CD8-positive, alpha-beta memory T cell (primary cell): ENCODE measurements at regions of chr3 and their contacts with region 1.

Region 1: GRCh38 chr3:48928679-48929078 is 10.0 kb downstream of the ARIH2 start:
- DNase-seq: no peak
- H3K4me3 ChIP-seq: no peak overlapping the region
- H3K4me3 Mint-ChIP-seq: peak overlapping the region in 4 of 7 donors; percentile 19 to 35 (median 22)
- H3K27ac ChIP-seq: no peak overlapping the region
- H3K27ac Mint-ChIP-seq: peak overlapping the region in 6 of 8 donors; percentile 6 to 92 (median 41)
- H3K4me1 ChIP-seq: peaks cover 49% of the 10 kb centered on the region
- H3K4me1 Mint-ChIP-seq: peaks cover 60 to 79% (median 71%) of the 10 kb centered on the region in 3 donors
- H3K27me3 ChIP-seq: no peaks in the 10 kb centered on the region
- H3K27me3 Mint-ChIP-seq: no peaks in the 10 kb centered on the region

Region 2: DNA sequence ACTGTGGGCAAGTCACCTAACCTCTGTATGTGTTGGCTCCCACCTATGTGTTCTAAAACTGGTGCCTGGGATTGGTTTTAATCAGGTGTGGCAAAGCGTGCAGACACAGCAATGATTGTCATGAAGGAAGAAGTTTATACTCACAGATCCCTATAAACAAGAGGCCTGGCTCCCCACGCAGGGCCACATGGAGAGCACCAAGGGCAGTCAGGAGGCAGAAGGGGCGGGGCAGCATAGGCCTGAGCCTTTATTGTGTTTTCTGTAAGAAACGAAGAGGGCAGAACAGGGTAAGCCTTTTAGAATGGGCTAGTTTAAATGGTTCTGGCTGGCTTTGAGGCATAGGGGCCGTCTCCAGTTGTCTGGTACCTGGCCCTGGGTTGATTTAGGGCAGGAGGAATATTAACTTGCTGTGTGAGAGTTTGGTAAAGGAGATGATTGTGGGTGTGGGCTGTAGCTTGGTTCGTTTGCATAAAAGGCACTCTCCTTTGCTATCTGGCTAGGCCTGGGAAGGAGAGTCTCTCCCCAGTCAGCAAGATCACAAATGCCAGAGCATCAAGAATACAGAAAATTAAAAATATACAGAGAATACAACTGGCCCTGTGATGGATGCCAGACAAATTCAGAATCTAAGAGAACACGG is 558.9 kb before region 1 on chr3:
- CTCF ChIA-PET with region 1: no interaction called
- POLR2A ChIA-PET with region 1: no interaction called
- DNase-seq: no peak
- H3K4me3 ChIP-seq: no peak overlapping the region
- H3K4me3 Mint-ChIP-seq: no peak overlapping the region
- H3K27ac ChIP-seq: no peak overlapping the region
- H3K27ac Mint-ChIP-seq: no peak overlapping the region
- H3K4me1 ChIP-seq: no peaks in the 10 kb centered on the region
- H3K4me1 Mint-ChIP-seq: no peaks in the 10 kb centered on the region
- H3K27me3 ChIP-seq: no peaks in the 10 kb centered on the region
- H3K27me3 Mint-ChIP-seq: peaks cover 0 to 1% of the 10 kb centered on the region in 2 donors

Region 3: DNA sequence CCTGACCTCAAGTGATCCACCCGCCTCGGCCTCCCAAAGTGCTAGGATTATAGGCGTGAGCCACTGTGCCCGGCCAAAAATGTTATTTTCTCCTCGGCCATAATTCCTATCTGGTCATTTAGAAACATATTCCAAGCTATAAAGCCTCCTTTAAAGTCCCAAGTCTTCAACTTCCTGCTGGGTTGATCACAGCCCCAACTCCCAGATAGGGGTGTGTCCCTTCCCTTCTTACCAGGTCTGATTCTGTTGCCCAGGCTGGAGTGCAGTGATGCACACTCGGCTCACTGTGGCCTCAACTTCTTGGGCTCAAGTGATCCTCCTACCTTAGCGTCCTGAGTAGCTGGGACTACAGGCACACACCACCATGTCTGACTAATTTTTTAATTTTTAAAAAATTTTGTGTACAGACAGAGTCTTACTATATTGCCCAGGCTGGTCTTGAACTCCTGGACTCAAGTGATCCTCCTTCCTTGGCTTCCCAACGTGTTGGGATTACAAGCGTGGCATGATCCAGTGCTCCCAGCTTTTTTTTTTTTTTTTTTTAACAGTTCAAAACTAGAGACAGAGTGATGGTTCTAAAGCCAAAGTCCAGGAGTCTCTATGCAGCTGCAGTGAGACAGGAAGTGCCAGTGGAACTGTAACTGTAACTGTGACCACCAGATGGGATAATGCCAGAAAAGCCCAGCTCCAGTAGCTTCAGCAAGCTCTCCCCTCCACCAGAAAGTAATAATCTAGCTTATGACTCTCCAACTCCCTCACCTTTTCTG is 72.8 kb before region 1 on chr3:
- CTCF ChIA-PET with region 1: no interaction called
- POLR2A ChIA-PET with region 1: no interaction called
- DNase-seq: no peak
- H3K4me3 ChIP-seq: no peak overlapping the region
- H3K4me3 Mint-ChIP-seq: no peak overlapping the region
- H3K27ac ChIP-seq: no peak overlapping the region
- H3K27ac Mint-ChIP-seq: peak overlapping the region in 4 of 8 donors; percentile 26 to 96 (median 63)
- H3K4me1 ChIP-seq: no peaks in the 10 kb centered on the region
- H3K4me1 Mint-ChIP-seq: no peaks in the 10 kb centered on the region
- H3K27me3 ChIP-seq: no peaks in the 10 kb centered on the region
- H3K27me3 Mint-ChIP-seq: no peaks in the 10 kb centered on the region

Region 4: GRCh38 chr3:48891606-48892005 is 37.1 kb before region 1 on chr3:
- CTCF ChIA-PET with region 1: no interaction called
- POLR2A ChIA-PET with region 1: no interaction called
- DNase-seq: no peak
- H3K4me3 ChIP-seq: no peak overlapping the region
- H3K4me3 Mint-ChIP-seq: no peak overlapping the region
- H3K27ac ChIP-seq: no peak overlapping the region
- H3K27ac Mint-ChIP-seq: no peak overlapping the region
- H3K4me1 ChIP-seq: peaks cover 8% of the 10 kb centered on the region
- H3K4me1 Mint-ChIP-seq: peaks cover 16 to 39% (median 22%) of the 10 kb centered on the region in 3 donors
- H3K27me3 ChIP-seq: no peaks in the 10 kb centered on the region
- H3K27me3 Mint-ChIP-seq: no peaks in the 10 kb centered on the region

Region 5: GRCh38 chr3:48918388-48919214 is 10.1 kb before region 1 on chr3 and contains the start of gene ARIH2:
- CTCF ChIA-PET with region 1: interaction called, 15 read pairs
- POLR2A ChIA-PET with region 1: no interaction called
- DNase-seq: peak; percentile 82 to 92 (median 87)
- H3K4me3 ChIP-seq: peak within 1 kb of the TSS; percentile 91
- H3K4me3 Mint-ChIP-seq: peak within 1 kb of the TSS; percentile 93 to 99 (median 98)
- H3K27ac ChIP-seq: peak within 1 kb of the TSS; percentile 98
- H3K27ac Mint-ChIP-seq: peak within 1 kb of the TSS; percentile 98 to 100 (median 99)
- H3K4me1 ChIP-seq: peaks cover 26% of the 10 kb centered on the region
- H3K4me1 Mint-ChIP-seq: peaks cover 23 to 41% (median 29%) of the 10 kb centered on the region in 3 donors
- H3K27me3 ChIP-seq: no peaks in the 10 kb centered on the region
- H3K27me3 Mint-ChIP-seq: no peaks in the 10 kb centered on the region
- total RNA-seq, gene ARIH2: 117 to 123 TPM